ENCODE measurements at regions of chr12 and their contacts with region 1.

Region 1: GRCh38 chr12:128905003-128905544 is 51.8 kb downstream of the GLT1D1 start:
- DNase-seq: peak; percentile 85 to 88 (median 88)
- ATAC-seq: peak; percentile 67 to 89 (median 76)
- H3K4me3 ChIP-seq: no peak overlapping the region
- H3K27ac ChIP-seq: peak overlapping the region; percentile 81 to 95 (median 91)
- H3K4me1 ChIP-seq: peaks cover 0 to 30% (median 10%) of the 10 kb centered on the region in 4 donors
- H3K27me3 ChIP-seq: no peaks in the 10 kb centered on the region
- CTCF ChIP-seq: no peak
- POLR2A ChIP-seq: peak; percentile 71

Region 2: GRCh38 chr12:128715485-128715884 is 189.6 kb before region 1 on chr12:
- intact Hi-C with region 1: no loop called
- DNase-seq: no peak
- ATAC-seq: no peak
- H3K4me3 ChIP-seq: no peak overlapping the region
- H3K27ac ChIP-seq: no peak overlapping the region
- H3K4me1 ChIP-seq: no peaks in the 10 kb centered on the region
- H3K27me3 ChIP-seq: no peaks in the 10 kb centered on the region
- CTCF ChIP-seq: no peak
- POLR2A ChIP-seq: no peak

Region 3: GRCh38 chr12:128817111-128818015 is 87.7 kb before region 1 on chr12:
- intact Hi-C with region 1: loop called in 1 of 2 experiments (anchors 5 kb)
- DNase-seq: peak; percentile 80 to 92 (median 88)
- ATAC-seq: peak; percentile 90 to 93 (median 92)
- H3K4me3 ChIP-seq: no peak overlapping the region
- H3K27ac ChIP-seq: peak overlapping the region; percentile 86 to 90 (median 89)
- H3K4me1 ChIP-seq: peaks cover 0 to 31% (median 9%) of the 10 kb centered on the region in 4 donors
- H3K27me3 ChIP-seq: no peaks in the 10 kb centered on the region
- CTCF ChIP-seq: no peak
- POLR2A ChIP-seq: peak; percentile 27